Dorsolateral prefrontal cortex (tissue), 120 donors: ENCODE measurements at regions of chr9 and their contacts with region 1.

Region 1: DNA sequence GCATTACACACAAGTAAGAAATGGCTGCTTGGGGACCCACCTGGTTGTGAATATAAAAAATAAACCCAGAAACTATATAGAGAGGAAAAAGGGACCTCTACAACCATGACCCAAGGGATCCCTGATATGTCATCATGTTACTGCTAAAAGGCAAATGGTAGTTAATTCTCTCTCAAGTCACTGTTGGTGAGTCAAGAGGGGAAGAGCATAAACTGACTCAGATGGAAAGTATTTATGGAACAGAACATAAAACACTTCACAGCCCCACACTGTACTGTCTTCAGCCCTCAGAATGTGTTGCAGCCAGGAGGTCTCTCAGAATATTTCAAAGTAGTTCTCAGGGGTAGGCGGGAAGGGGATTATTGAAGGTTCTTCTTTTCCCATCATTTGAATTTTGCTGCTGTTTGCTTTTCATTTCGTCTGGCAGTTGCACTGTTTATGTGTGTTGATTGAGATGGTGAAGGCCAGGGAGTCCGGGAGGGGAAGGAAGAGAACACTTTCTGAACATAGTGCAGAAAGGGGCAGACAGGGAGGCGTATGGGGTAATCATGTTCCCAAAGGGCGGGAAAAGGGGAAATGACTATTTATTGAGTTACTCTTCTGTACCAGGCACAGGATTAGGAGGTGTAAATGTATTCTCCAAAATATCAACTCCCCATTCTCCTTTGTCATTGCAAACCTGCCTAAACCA is 85.5 kb downstream of the TEK start:
- DNase-seq: no peak
- H3K4me3 ChIP-seq: no peak overlapping the region
- H3K27ac ChIP-seq: peak overlapping the region in 23 of 59 donors; percentile 2 to 75 (median 38)
- H3K27me3 ChIP-seq: no peaks in the 10 kb centered on the region
- CTCF ChIP-seq: no peak

Region 2: GRCh38 chr9:27125030-27125429 is 69.5 kb before region 1 on chr9:
- intact Hi-C with region 1: loop called (anchors 2 to 10 kb)
- DNase-seq: peak in 9 of 10 donors; percentile 6 to 80 (median 69)
- H3K4me3 ChIP-seq: no peak overlapping the region
- H3K27ac ChIP-seq: peak overlapping the region in 33 of 59 donors; percentile 5 to 74 (median 43)
- H3K27me3 ChIP-seq: peaks cover 0 to 4% (median 0%) of the 10 kb centered on the region in 45 donors
- CTCF ChIP-seq: no peak

Region 3: GRCh38 chr9:27176971-27177370 is 17.6 kb before region 1 on chr9:
- intact Hi-C with region 1: no loop called
- DNase-seq: no peak
- H3K4me3 ChIP-seq: no peak overlapping the region
- H3K27ac ChIP-seq: no peak overlapping the region
- H3K27me3 ChIP-seq: no peaks in the 10 kb centered on the region
- CTCF ChIP-seq: no peak

Region 4: GRCh38 chr9:27247756-27248155 is 53.2 kb after region 1 on chr9:
- intact Hi-C with region 1: no loop called
- DNase-seq: peak in 1 of 10 donors; percentile 10
- H3K4me3 ChIP-seq: no peak overlapping the region
- H3K27ac ChIP-seq: no peak overlapping the region
- H3K27me3 ChIP-seq: no peaks in the 10 kb centered on the region
- CTCF ChIP-seq: peak in 55 of 56 donors; percentile 21 to 67 (median 52)